Activated CD4-positive, alpha-beta T cell treated with anti-CD3 and anti-CD28 coated beads for 36 hours (primary cell): ENCODE measurements at regions of chr10 and their contacts with region 1.

Region 1: DNA sequence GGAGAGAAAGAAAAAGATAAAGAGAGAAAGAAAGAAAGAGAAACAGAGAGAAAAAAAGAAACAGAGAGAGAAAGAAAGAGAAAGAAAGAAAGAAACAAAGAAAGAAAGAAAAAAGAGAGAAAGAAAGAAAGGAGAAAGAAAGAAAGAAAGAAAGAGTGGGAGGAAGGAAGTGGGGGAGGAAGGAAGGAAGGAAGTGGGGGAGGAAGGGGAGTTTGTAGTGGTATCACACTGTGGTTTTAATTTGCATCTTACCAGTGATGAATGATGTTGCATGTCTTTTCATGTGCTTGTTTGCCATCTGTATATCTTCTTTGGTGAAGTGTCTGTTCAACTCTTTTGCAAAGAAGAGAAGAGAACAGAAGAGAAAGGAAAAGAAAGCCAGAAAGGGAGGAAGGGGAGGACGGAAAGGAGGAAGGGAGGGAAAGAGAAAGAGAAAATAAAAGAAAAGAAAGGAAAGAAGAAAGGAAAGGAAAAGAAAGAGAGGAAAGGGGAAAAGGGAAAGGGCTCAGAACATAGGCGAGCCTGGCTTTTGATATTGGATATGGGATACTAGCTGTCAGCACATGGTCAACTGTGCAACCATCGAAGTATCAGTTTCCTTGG is 79.2 kb upstream of the FRMD4A start:
- DNase-seq: no peak
- ATAC-seq: no peak
- H3K4me3 Mint-ChIP-seq: no peak overlapping the region
- H3K27ac Mint-ChIP-seq: peak overlapping the region; percentile 81
- H3K4me1 Mint-ChIP-seq: peaks cover 22% of the 10 kb centered on the region
- H3K27me3 Mint-ChIP-seq: peaks cover 47% of the 10 kb centered on the region

Region 2: DNA sequence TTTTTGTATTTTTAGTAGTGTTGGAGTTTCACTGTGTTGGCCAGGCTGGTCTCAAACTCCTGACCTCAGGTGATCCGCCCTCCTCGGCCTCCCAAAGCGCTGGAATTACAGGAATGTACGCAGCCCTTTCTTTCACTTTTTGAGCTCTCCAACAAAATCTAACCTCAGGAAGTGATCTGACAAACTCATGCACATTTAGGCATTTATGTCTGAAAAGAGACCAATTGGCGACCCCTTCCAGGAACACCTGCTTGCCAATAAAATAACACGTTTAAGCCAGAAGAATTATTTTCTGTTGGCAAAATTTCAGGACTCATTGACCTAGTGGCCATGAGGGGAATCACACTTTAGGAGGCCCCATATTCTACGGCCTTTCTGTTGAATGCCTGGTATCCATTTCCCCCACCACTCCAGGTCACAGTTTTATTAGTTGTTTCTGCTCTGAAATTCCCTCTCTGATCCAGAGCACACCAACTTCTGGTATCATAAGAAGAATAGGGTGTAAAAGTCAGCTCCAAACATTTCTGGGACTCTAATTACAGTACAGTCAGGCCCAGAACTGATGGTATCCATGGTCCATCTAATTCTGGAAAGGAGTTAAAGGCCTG is 13.4 kb before region 1 on chr10:
- CTCF ChIA-PET with region 1: interaction called, 10 read pairs
- POLR2A ChIA-PET with region 1: no interaction called
- intact Hi-C with region 1: no loop called
- DNase-seq: no peak
- ATAC-seq: no peak
- H3K4me3 Mint-ChIP-seq: no peak overlapping the region
- H3K27ac Mint-ChIP-seq: no peak overlapping the region
- H3K4me1 Mint-ChIP-seq: no peaks in the 10 kb centered on the region
- H3K27me3 Mint-ChIP-seq: peaks cover 37% of the 10 kb centered on the region

Region 3: GRCh38 chr10:14648005-14648765 is 238.2 kb after region 1 on chr10:
- CTCF ChIA-PET with region 1: no interaction called
- POLR2A ChIA-PET with region 1: no interaction called
- intact Hi-C with region 1: no loop called
- DNase-seq: peak; percentile 79
- ATAC-seq: peak; percentile 66
- H3K4me3 Mint-ChIP-seq: peak overlapping the region; percentile 65
- H3K27ac Mint-ChIP-seq: peak overlapping the region; percentile 98
- H3K4me1 Mint-ChIP-seq: peaks cover 85% of the 10 kb centered on the region
- H3K27me3 Mint-ChIP-seq: no peaks in the 10 kb centered on the region